Right lobe of liver (tissue), 6 donors: ENCODE measurements at regions of chr9 and their contacts with region 1.

Region 1: GRCh38 chr9:104564358-104564757 is 4.6 kb upstream of the OR13C8 start:
- DNase-seq: no peak
- ATAC-seq: no peak
- H3K4me3 ChIP-seq: no peak overlapping the region
- H3K27ac ChIP-seq: no peak overlapping the region
- H3K4me1 ChIP-seq: no peaks in the 10 kb centered on the region
- H3K27me3 ChIP-seq: no peaks in the 10 kb centered on the region
- CTCF ChIP-seq: no peak
- POLR2A ChIP-seq: no peak

Region 2: DNA sequence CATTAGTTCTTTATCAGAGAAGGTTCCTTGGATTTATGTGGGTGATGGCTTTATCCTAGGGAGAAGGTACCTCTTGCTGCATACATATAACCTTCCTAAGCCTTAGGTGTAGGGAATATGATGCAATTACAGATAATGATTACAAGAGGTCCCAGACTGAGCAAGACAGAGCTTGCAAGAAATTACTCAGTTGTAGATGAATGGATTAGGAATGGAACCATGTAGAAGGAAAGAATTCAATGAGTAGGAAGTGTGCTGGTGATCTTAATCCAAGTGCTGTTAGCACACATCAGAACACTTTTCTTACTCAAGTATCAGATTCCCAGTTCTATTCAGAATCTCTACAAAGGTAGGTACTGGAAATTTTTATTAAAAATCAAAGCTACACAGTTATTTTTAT is 57.8 kb before region 1 on chr9:
- intact Hi-C with region 1: loop called in 1 of 2 experiments (anchors 10 kb)
- DNase-seq: no peak
- ATAC-seq: no peak
- H3K4me3 ChIP-seq: no peak overlapping the region
- H3K27ac ChIP-seq: no peak overlapping the region
- H3K4me1 ChIP-seq: no peaks in the 10 kb centered on the region
- H3K27me3 ChIP-seq: no peaks in the 10 kb centered on the region
- CTCF ChIP-seq: no peak
- POLR2A ChIP-seq: no peak